Activated naive CD8-positive, alpha-beta T cell treated with anti-CD3 and anti-CD28 coated beads, Interleukin-2, amount 10 ng/mL, durations not matched to agents 7 days and 5 days (primary cell): ENCODE measurements at regions of chr6 and their contacts with region 1.

Region 1: GRCh38 chr6:52361945-52362442 is at the start of gene PAQR8:
- DNase-seq: peak; percentile 92
- ATAC-seq: peak; percentile 89
- H3K4me3 Mint-ChIP-seq: peak within 1 kb of the TSS; percentile 95
- H3K27ac Mint-ChIP-seq: peak within 1 kb of the TSS; percentile 88
- H3K4me1 Mint-ChIP-seq: peaks cover 31% of the 10 kb centered on the region
- H3K27me3 Mint-ChIP-seq: no peaks in the 10 kb centered on the region
- total RNA-seq, gene PAQR8: 25.7 to 26.4 TPM

Region 2: DNA sequence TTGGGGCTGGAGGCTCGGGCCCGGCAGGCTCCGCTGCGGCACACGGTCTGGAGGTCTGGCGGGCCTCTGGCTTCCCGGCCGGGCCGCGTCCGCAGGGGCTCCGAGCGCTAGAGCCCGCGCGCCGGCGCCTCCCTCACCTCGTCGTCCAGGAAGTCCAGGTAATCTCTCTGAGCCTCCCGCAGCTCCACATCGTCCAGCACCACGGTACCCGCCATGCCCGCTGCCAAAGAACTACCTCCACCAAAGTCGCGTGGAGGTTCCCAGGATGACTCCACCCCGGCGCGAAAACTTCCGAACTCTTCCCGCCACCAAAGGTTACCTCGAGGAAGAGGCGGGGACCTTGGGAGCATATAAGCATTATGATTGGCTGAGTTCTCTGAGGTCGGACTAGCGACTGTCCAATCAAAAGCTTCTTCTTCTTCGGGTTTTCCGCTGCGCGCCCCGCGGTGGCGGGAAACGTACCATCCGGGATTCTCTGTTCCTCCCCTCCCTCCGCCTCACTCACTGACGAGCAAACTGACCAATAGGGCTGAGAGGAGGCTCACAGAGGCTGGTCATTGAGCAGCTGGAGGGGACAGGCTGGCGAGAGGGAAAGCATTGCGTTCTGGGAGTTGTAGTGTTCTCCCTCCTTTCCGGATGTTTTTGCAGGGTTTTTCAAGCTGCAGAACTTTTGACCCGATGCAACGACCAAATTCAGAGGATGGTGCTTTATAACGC is 77.4 kb before region 1 on chr6 and contains the start of gene MCM3:
- POLR2A ChIA-PET with region 1: interaction called, 61 read pairs
- DNase-seq: peak; percentile 92
- ATAC-seq: peak; percentile 98
- H3K4me3 Mint-ChIP-seq: peak within 1 kb of the TSS; percentile 83
- H3K27ac Mint-ChIP-seq: peak within 1 kb of the TSS; percentile 71
- H3K4me1 Mint-ChIP-seq: peaks cover 43% of the 10 kb centered on the region
- H3K27me3 Mint-ChIP-seq: no peaks in the 10 kb centered on the region
- total RNA-seq, gene MCM3: 180 to 182 TPM

Region 3: GRCh38 chr6:52304983-52305390 is 57.0 kb before region 1 on chr6:
- POLR2A ChIA-PET with region 1: interaction called, 29 read pairs
- DNase-seq: no peak
- ATAC-seq: peak; percentile 21
- H3K4me3 Mint-ChIP-seq: peak overlapping the region; percentile 51
- H3K27ac Mint-ChIP-seq: peak overlapping the region; percentile 81
- H3K4me1 Mint-ChIP-seq: peaks cover 40% of the 10 kb centered on the region
- H3K27me3 Mint-ChIP-seq: no peaks in the 10 kb centered on the region

Region 4: GRCh38 chr6:52337633-52338290 is 24.2 kb before region 1 on chr6:
- POLR2A ChIA-PET with region 1: interaction called, 10 read pairs
- DNase-seq: no peak
- ATAC-seq: peak; percentile 46
- H3K4me3 Mint-ChIP-seq: peak overlapping the region; percentile 17
- H3K27ac Mint-ChIP-seq: peak overlapping the region; percentile 82
- H3K4me1 Mint-ChIP-seq: peaks cover 49% of the 10 kb centered on the region
- H3K27me3 Mint-ChIP-seq: no peaks in the 10 kb centered on the region

Region 5: GRCh38 chr6:52375780-52376556 is 14.0 kb after region 1 on chr6:
- POLR2A ChIA-PET with region 1: interaction called, 23 read pairs
- DNase-seq: no peak
- ATAC-seq: peak; percentile 82
- H3K4me3 Mint-ChIP-seq: peak overlapping the region; percentile 44
- H3K27ac Mint-ChIP-seq: peak overlapping the region; percentile 47
- H3K4me1 Mint-ChIP-seq: peaks cover 39% of the 10 kb centered on the region
- H3K27me3 Mint-ChIP-seq: no peaks in the 10 kb centered on the region

Region 6: DNA sequence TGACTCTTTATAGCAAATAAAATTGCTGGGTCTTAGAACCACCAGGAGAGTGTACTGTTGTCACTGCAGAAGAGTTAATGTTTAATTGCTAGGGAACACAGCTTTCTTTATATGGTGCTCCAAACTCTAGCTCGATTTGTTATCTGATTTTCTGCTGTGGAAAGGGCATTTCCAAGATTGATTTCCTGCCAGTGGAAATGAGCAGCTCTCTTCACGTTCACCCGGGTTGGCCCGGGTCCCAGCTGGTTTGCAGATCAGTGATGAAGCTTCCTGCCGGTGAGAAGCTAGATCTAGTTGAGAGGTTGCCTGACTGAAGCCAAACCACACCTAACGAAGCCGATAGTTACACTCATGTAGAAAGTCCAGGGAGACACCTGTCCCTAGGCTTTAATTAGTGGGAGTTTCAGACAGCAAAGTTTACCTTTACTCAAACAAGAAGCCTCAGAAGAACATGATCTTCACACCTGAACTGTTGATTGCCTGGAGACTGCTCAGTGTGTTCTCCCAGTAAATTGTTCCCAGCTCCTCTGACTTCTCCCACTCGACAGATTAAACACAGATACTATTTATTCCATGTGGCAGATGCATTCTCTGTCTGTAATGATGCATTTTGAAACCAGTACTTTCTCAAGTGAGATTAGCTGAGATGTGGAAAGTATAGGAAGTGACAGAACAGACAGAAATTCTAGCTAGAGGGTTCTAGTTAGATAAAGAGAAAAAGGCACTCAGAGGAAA is 27.8 kb after region 1 on chr6:
- POLR2A ChIA-PET with region 1: interaction called, 55 read pairs
- DNase-seq: peak; percentile 49
- ATAC-seq: peak; percentile 54
- H3K4me3 Mint-ChIP-seq: peak overlapping the region; percentile 80
- H3K27ac Mint-ChIP-seq: peak overlapping the region; percentile 93
- H3K4me1 Mint-ChIP-seq: peaks cover 59% of the 10 kb centered on the region
- H3K27me3 Mint-ChIP-seq: no peaks in the 10 kb centered on the region

Region 7: GRCh38 chr6:52399511-52400312 is 37.7 kb after region 1 on chr6:
- POLR2A ChIA-PET with region 1: interaction called, 31 read pairs
- DNase-seq: no peak
- ATAC-seq: peak; percentile 21
- H3K4me3 Mint-ChIP-seq: no peak overlapping the region
- H3K27ac Mint-ChIP-seq: peak overlapping the region; percentile 84
- H3K4me1 Mint-ChIP-seq: peaks cover 52% of the 10 kb centered on the region
- H3K27me3 Mint-ChIP-seq: no peaks in the 10 kb centered on the region